CD4-positive, alpha-beta memory T cell (primary cell): ENCODE measurements at regions of chr19 and their contacts with region 1.

Region 1: DNA sequence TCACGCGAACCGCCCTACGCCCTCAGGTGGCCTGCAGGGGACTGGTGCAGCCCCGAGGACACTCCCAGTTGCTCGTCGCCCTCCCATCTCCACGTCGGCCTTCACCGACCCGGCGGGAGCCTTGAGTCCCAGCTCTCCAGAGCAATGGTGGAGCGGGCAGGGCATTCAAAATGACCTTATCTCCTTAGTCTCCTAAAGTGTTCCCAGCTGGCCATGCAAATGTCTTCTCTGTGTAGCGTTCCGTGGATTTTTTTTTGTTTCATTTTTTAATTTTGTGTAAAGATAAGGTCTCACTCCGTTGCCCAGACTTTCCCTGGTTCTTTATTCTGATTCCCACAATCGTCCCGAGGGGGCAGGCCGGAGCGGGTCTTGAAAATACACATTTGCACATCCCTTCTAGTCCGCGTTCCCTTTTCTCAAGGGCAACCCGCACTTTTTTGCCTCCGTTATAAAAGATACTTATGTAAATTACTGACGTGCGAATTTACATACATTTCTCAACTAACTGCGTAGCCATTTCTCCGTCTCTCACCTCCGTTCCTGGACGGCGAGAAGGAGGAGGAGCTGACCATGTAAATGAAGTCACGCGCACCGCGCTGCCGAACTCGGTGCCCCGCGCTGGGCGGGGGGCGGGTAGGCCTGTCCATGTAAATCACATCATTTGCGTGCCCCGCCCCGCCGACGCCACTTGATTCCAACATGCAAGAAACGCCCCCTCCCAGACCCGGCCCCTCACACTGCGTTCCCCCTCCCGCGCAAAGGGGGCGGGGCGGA is 581 bp upstream of the EGLN2 start:
- DNase-seq: peak; percentile 100
- H3K4me3 ChIP-seq: peak overlapping the region; percentile 55 to 86
- H3K4me3 Mint-ChIP-seq: peak overlapping the region; percentile 92 to 99 (median 96)
- H3K27ac ChIP-seq: peak overlapping the region; percentile 82
- H3K27ac Mint-ChIP-seq: peak overlapping the region; percentile 98 to 100 (median 99)
- H3K4me1 ChIP-seq: peaks cover 47% of the 10 kb centered on the region
- H3K4me1 Mint-ChIP-seq: peaks cover 30 to 55% (median 41%) of the 10 kb centered on the region in 4 donors
- H3K27me3 ChIP-seq: no peaks in the 10 kb centered on the region
- H3K27me3 Mint-ChIP-seq: no peaks in the 10 kb centered on the region

Region 2: DNA sequence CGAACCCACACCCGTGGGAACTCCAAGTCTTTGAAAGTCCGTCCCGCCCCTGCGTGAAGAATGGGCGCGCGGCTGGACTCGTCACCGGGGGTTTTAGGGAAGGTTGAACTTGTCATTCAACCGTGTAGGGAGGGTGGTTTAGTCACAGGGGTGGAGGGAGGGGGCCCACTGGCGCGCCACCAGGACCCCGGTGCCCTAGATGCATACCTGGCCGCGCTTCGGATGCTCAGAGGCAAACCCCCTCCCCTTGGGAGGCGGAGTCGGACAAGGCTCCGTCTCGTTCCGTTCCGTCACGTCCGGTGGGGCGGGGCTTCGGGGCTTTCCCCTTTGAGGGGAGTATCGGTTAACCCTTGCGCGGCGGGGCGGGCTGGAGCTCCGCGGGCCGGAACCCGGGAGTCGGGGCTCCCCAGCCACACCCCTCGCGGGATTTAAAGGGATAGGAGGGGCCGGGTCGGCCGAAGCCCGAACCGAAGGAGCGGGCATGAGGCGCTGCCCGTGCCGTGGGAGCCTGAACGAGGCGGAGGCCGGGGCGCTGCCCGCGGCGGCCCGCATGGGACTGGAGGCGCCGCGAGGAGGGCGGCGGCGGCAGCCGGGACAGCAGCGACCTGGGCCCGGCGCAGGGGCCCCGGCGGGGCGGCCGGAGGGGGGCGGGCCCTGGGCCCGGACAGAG is 81.6 kb before region 1 on chr19 and contains the starts of genes COQ8B and ITPKC:
- CTCF ChIA-PET with region 1: no interaction called
- POLR2A ChIA-PET with region 1: interaction called, 16 read pairs
- intact Hi-C with region 1: loop called (anchors 1 kb)
- DNase-seq: peak; percentile 98 to 100 (median 99)
- H3K4me3 ChIP-seq: peak within 1 kb of the TSS; percentile 78 to 83
- H3K4me3 Mint-ChIP-seq: peak within 1 kb of the TSS; percentile 87 to 97 (median 92)
- H3K27ac ChIP-seq: peak within 1 kb of the TSS; percentile 98
- H3K27ac Mint-ChIP-seq: peak within 1 kb of the TSS; percentile 96 to 99 (median 98)
- H3K4me1 ChIP-seq: peaks cover 70% of the 10 kb centered on the region
- H3K4me1 Mint-ChIP-seq: peaks cover 40 to 83% (median 58%) of the 10 kb centered on the region in 4 donors
- H3K27me3 ChIP-seq: no peaks in the 10 kb centered on the region
- H3K27me3 Mint-ChIP-seq: no peaks in the 10 kb centered on the region
- total RNA-seq, gene COQ8B: 48.0 to 54.7 TPM
- total RNA-seq, gene ITPKC: 8.1 to 10.2 TPM

Region 3: GRCh38 chr19:40735003-40735771 is 63.2 kb before region 1 on chr19:
- CTCF ChIA-PET with region 1: no interaction called
- POLR2A ChIA-PET with region 1: no interaction called
- intact Hi-C with region 1: no loop called
- DNase-seq: peak in 1 of 5 donors; percentile 10
- H3K4me3 ChIP-seq: no peak overlapping the region
- H3K4me3 Mint-ChIP-seq: no peak overlapping the region
- H3K27ac ChIP-seq: no peak overlapping the region
- H3K27ac Mint-ChIP-seq: peak overlapping the region in 2 of 7 donors; percentile 9 to 62
- H3K4me1 ChIP-seq: no peaks in the 10 kb centered on the region
- H3K4me1 Mint-ChIP-seq: peaks cover 0 to 3% (median 0%) of the 10 kb centered on the region in 4 donors
- H3K27me3 ChIP-seq: no peaks in the 10 kb centered on the region
- H3K27me3 Mint-ChIP-seq: no peaks in the 10 kb centered on the region

Region 4: DNA sequence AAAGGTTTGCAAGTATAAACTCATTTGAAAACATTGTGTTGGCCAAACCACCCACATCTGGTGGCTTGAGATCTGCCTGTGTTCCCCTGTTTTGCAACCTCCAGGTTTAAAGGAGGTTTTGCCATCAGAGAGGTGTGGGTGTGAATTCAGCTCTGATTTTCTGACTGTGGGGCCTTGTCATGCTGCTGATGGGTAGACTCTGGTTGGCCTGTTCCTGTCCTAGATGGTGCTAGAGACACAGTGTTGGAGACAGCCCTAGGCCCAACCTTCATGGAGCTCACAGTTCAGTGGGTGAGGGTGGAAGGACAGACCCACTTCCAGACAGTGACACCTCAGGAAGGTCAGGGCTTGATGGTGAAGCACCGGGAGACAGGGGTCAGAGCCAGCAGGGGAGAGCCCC is 12.9 kb before region 1 on chr19:
- CTCF ChIA-PET with region 1: interaction called, 40 read pairs
- POLR2A ChIA-PET with region 1: interaction called, 369 read pairs
- intact Hi-C with region 1: no loop called
- DNase-seq: peak in 1 of 5 donors; percentile 16
- H3K4me3 ChIP-seq: no peak overlapping the region
- H3K4me3 Mint-ChIP-seq: no peak overlapping the region
- H3K27ac ChIP-seq: no peak overlapping the region
- H3K27ac Mint-ChIP-seq: peak overlapping the region in 3 of 7 donors; percentile 37 to 67 (median 64)
- H3K4me1 ChIP-seq: no peaks in the 10 kb centered on the region
- H3K4me1 Mint-ChIP-seq: peaks cover 5 to 10% (median 8%) of the 10 kb centered on the region in 4 donors
- H3K27me3 ChIP-seq: no peaks in the 10 kb centered on the region
- H3K27me3 Mint-ChIP-seq: no peaks in the 10 kb centered on the region

Region 5: GRCh38 chr19:40813182-40813958 is 15.0 kb after region 1 on chr19:
- CTCF ChIA-PET with region 1: interaction called, 20 read pairs
- POLR2A ChIA-PET with region 1: interaction called, 35 read pairs
- intact Hi-C with region 1: loop called (anchors 2 kb)
- DNase-seq: no peak
- H3K4me3 ChIP-seq: no peak overlapping the region
- H3K4me3 Mint-ChIP-seq: peak overlapping the region in 4 of 8 donors; percentile 41 to 97 (median 78)
- H3K27ac ChIP-seq: no peak overlapping the region
- H3K27ac Mint-ChIP-seq: peak overlapping the region; percentile 8 to 86 (median 49)
- H3K4me1 ChIP-seq: peaks cover 49% of the 10 kb centered on the region
- H3K4me1 Mint-ChIP-seq: peaks cover 18 to 58% (median 33%) of the 10 kb centered on the region in 4 donors
- H3K27me3 ChIP-seq: no peaks in the 10 kb centered on the region
- H3K27me3 Mint-ChIP-seq: no peaks in the 10 kb centered on the region

Region 6: DNA sequence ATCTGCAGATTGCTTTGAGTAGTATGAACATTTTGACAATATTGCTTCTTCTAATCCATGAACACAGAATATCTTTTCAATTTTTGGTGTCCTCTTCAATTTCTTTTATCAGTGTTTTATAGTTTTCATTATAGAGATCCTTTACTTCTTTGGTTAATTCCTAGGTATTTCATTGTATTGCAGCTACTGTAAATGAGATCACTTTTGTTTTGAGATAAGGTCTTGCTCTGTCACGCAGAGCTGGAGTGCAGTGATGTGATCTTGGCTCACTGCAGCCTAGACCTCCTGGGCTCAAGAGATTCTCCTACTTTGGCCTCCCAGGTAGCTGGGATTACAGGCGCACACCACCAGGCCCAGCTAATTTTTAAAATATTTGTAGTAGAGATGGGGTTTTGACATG is 73.8 kb after region 1 on chr19:
- CTCF ChIA-PET with region 1: no interaction called
- POLR2A ChIA-PET with region 1: no interaction called
- intact Hi-C with region 1: loop called (anchors 1 kb)
- DNase-seq: no peak
- H3K4me3 ChIP-seq: no peak overlapping the region
- H3K4me3 Mint-ChIP-seq: no peak overlapping the region
- H3K27ac ChIP-seq: no peak overlapping the region
- H3K27ac Mint-ChIP-seq: no peak overlapping the region
- H3K4me1 ChIP-seq: no peaks in the 10 kb centered on the region
- H3K4me1 Mint-ChIP-seq: peaks cover 6 to 11% (median 8%) of the 10 kb centered on the region in 4 donors
- H3K27me3 ChIP-seq: no peaks in the 10 kb centered on the region
- H3K27me3 Mint-ChIP-seq: peaks cover 11 to 18% of the 10 kb centered on the region in 2 donors